CD8-positive, alpha-beta T cell (primary cell): ENCODE measurements at regions of chr2 and their contacts with region 1.

Region 1: DNA sequence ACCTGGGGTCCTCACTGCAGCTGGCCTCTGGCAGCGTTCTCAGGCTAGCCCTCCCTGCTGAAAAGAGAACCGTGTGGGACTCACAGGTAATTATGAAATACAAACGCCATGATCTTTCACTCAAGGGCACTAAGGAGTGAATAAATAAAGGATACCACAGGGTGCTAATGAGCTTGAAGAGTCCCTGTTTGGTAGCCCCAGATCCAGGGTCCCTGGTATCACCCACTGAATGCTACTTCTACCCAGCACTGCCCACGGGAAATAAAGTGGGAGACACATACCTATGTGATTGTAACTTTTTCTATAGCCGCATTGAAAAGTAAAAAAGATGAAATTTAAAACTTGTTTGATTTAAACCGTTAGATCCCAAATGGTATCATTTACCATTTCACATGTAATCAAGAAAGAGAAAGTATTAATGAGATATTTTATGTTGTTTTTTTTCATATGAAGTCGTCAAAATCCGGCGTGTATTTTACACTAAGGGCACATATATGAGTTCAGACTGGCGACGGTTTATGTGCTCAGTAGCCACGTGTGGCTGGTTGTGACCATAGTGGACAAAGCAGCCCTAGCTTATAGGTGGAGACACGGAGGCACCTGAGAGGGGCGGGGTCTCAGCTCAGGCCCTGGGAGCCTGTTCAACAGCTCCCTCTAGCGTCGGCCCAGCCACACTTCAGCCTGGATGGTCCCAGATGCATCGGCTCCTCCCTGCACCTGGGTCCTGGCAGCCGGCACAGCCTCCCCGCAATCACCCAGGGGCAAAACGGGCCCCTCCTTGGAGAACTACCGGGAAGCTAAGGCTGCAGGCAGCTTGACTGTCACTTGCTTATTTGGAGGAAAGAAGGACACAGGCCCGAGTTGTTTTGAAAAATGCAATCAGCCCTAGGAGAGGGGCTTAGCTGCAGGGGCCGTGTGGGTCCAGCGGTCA is 39.2 kb downstream of the ODC1 start:
- DNase-seq: peak; percentile 64 to 90 (median 83)
- ATAC-seq: peak; percentile 83
- H3K4me3 ChIP-seq: peak overlapping the region in 1 of 2 experiments; percentile 15
- H3K4me3 Mint-ChIP-seq: peak overlapping the region; percentile 80
- H3K27ac ChIP-seq: peak overlapping the region; percentile 24 to 75
- H3K27ac Mint-ChIP-seq: peak overlapping the region; percentile 94
- H3K4me1 ChIP-seq: peaks cover 40% of the 10 kb centered on the region
- H3K4me1 Mint-ChIP-seq: peaks cover 40% of the 10 kb centered on the region
- H3K27me3 ChIP-seq: no peaks in the 10 kb centered on the region
- H3K27me3 Mint-ChIP-seq: no peaks in the 10 kb centered on the region
- CTCF ChIP-seq: peak; percentile 87

Region 2: DNA sequence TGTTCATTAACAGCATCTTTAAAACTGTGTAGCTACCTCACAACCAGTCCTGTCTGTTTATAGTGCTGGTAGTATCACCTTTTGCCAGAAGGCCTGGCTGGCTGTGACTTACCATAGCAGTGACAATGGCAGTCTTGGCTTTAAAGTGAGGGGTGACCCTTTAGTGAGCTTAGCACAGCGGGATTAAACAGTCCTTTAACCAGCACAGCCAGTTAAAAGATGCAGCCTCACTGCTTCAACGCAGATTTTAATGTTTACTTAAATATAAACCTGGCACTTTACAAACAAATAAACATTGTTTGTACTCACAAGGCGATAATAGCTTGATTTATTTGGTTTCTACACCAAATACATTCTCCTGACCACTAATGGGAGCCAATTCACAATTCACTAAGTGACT is 279.4 kb before region 1 on chr2:
- CTCF ChIA-PET with region 1: interaction called, 93 read pairs
- POLR2A ChIA-PET with region 1: interaction called, 3 read pairs
- intact Hi-C with region 1: loop called (anchors 1 kb)
- DNase-seq: no peak
- ATAC-seq: no peak
- H3K4me3 ChIP-seq: no peak overlapping the region
- H3K4me3 Mint-ChIP-seq: no peak overlapping the region
- H3K27ac ChIP-seq: no peak overlapping the region
- H3K27ac Mint-ChIP-seq: no peak overlapping the region
- H3K4me1 ChIP-seq: no peaks in the 10 kb centered on the region
- H3K4me1 Mint-ChIP-seq: peaks cover 6% of the 10 kb centered on the region
- H3K27me3 ChIP-seq: no peaks in the 10 kb centered on the region
- H3K27me3 Mint-ChIP-seq: peaks cover 5% of the 10 kb centered on the region
- CTCF ChIP-seq: no peak

Region 3: GRCh38 chr2:10267551-10268465 is 141.1 kb before region 1 on chr2:
- CTCF ChIA-PET with region 1: interaction called, 189 read pairs
- POLR2A ChIA-PET with region 1: interaction called, 8 read pairs
- intact Hi-C with region 1: loop called (anchors 1 kb)
- DNase-seq: no peak
- ATAC-seq: no peak
- H3K4me3 ChIP-seq: no peak overlapping the region
- H3K4me3 Mint-ChIP-seq: no peak overlapping the region
- H3K27ac ChIP-seq: no peak overlapping the region
- H3K27ac Mint-ChIP-seq: no peak overlapping the region
- H3K4me1 ChIP-seq: peaks cover 10% of the 10 kb centered on the region
- H3K4me1 Mint-ChIP-seq: peaks cover 6% of the 10 kb centered on the region
- H3K27me3 ChIP-seq: no peaks in the 10 kb centered on the region
- H3K27me3 Mint-ChIP-seq: no peaks in the 10 kb centered on the region
- CTCF ChIP-seq: no peak

Region 4: GRCh38 chr2:10302479-10303180 is 106.3 kb before region 1 on chr2 and contains the start of gene HPCAL1:
- CTCF ChIA-PET with region 1: interaction called, 205 read pairs
- POLR2A ChIA-PET with region 1: interaction called, 49 read pairs
- intact Hi-C with region 1: loop called (anchors 1 to 2 kb)
- DNase-seq: peak; percentile 54 to 90 (median 80)
- ATAC-seq: peak; percentile 67
- H3K4me3 ChIP-seq: peak within 1 kb of the TSS; percentile 84 to 86
- H3K4me3 Mint-ChIP-seq: peak within 1 kb of the TSS; percentile 98
- H3K27ac ChIP-seq: peak within 1 kb of the TSS; percentile 52 to 73
- H3K27ac Mint-ChIP-seq: peak within 1 kb of the TSS; percentile 92
- H3K4me1 ChIP-seq: peaks cover 60% of the 10 kb centered on the region
- H3K4me1 Mint-ChIP-seq: peaks cover 70% of the 10 kb centered on the region
- H3K27me3 ChIP-seq: no peaks in the 10 kb centered on the region
- H3K27me3 Mint-ChIP-seq: no peaks in the 10 kb centered on the region
- CTCF ChIP-seq: peak; percentile 61
- total RNA-seq, gene HPCAL1: 25.0 to 25.6 TPM

Region 5: GRCh38 chr2:10369269-10370255 is 39.4 kb before region 1 on chr2:
- CTCF ChIA-PET with region 1: interaction called, 24 read pairs
- POLR2A ChIA-PET with region 1: no interaction called
- intact Hi-C with region 1: no loop called
- DNase-seq: no peak
- ATAC-seq: no peak
- H3K4me3 ChIP-seq: no peak overlapping the region
- H3K4me3 Mint-ChIP-seq: no peak overlapping the region
- H3K27ac ChIP-seq: no peak overlapping the region
- H3K27ac Mint-ChIP-seq: peak overlapping the region; percentile 69
- H3K4me1 ChIP-seq: peaks cover 18% of the 10 kb centered on the region
- H3K4me1 Mint-ChIP-seq: peaks cover 65% of the 10 kb centered on the region
- H3K27me3 ChIP-seq: no peaks in the 10 kb centered on the region
- H3K27me3 Mint-ChIP-seq: no peaks in the 10 kb centered on the region
- CTCF ChIP-seq: no peak

Region 6: GRCh38 chr2:10424051-10424450 is 15.1 kb after region 1 on chr2:
- CTCF ChIA-PET with region 1: interaction called, 21 read pairs
- POLR2A ChIA-PET with region 1: interaction called, 3 read pairs
- intact Hi-C with region 1: no loop called
- DNase-seq: no peak
- ATAC-seq: no peak
- H3K4me3 ChIP-seq: no peak overlapping the region
- H3K4me3 Mint-ChIP-seq: no peak overlapping the region
- H3K27ac ChIP-seq: no peak overlapping the region
- H3K27ac Mint-ChIP-seq: no peak overlapping the region
- H3K4me1 ChIP-seq: no peaks in the 10 kb centered on the region
- H3K4me1 Mint-ChIP-seq: no peaks in the 10 kb centered on the region
- H3K27me3 ChIP-seq: no peaks in the 10 kb centered on the region
- H3K27me3 Mint-ChIP-seq: no peaks in the 10 kb centered on the region
- CTCF ChIP-seq: no peak